Mammary epithelial cell (primary cell): ENCODE measurements at regions of chr16 and their contacts with region 1.

Region 1: GRCh38 chr16:48623304-48624016 is 13.5 kb upstream of the N4BP1 start:
- DNase-seq: peak; percentile 87
- H3K4me3 ChIP-seq: peak overlapping the region; percentile 31 to 48 (median 47)
- H3K27ac ChIP-seq: peak overlapping the region; percentile 23
- H3K4me1 ChIP-seq: peaks cover 8% of the 10 kb centered on the region
- H3K27me3 ChIP-seq: no peaks in the 10 kb centered on the region
- CTCF ChIP-seq: peak; percentile 93 to 100

Region 2: GRCh38 chr16:48353565-48354163 is 269.8 kb before region 1 on chr16:
- CTCF ChIA-PET with region 1: interaction called, 3 read pairs
- dilution Hi-C with region 1: loop called (anchors 25 kb)
- in situ Hi-C with region 1: loop called (anchors 10 kb)
- intact Hi-C with region 1: loop called (anchors 1 kb)
- DNase-seq: peak; percentile 58
- H3K4me3 ChIP-seq: no peak overlapping the region
- H3K27ac ChIP-seq: no peak overlapping the region
- H3K4me1 ChIP-seq: no peaks in the 10 kb centered on the region
- H3K27me3 ChIP-seq: no peaks in the 10 kb centered on the region
- CTCF ChIP-seq: peak; percentile 90 to 95

Region 3: DNA sequence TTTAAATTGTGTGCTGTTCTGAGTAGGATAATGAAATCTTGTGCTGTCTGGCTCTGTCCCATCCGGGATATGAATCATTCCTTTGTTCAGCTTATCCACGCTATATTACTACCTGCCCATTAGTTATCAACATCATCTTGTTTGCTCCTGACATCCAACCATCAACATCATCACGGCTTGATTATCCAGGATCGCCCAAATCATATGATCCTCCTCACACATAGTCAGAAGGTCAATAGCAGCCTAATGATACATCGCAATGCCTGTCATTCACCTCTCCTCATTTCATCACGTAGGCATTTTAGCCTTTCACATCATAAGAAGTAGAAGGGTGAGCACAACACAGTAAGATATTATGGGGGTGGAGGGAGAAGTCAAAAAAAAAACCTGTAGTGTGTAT is 161.3 kb before region 1 on chr16:
- CTCF ChIA-PET with region 1: no interaction called
- dilution Hi-C with region 1: no loop called
- in situ Hi-C with region 1: no loop called
- intact Hi-C with region 1: loop called (anchors 5 kb)
- DNase-seq: peak; percentile 95
- H3K4me3 ChIP-seq: no peak overlapping the region
- H3K27ac ChIP-seq: peak overlapping the region; percentile 5
- H3K4me1 ChIP-seq: peaks cover 12% of the 10 kb centered on the region
- H3K27me3 ChIP-seq: no peaks in the 10 kb centered on the region
- CTCF ChIP-seq: no peak

Region 4: GRCh38 chr16:48535831-48536613 is 87.4 kb before region 1 on chr16:
- CTCF ChIA-PET with region 1: no interaction called
- dilution Hi-C with region 1: no loop called
- in situ Hi-C with region 1: loop called (anchors 5 to 10 kb)
- intact Hi-C with region 1: no loop called
- DNase-seq: peak; percentile 86
- H3K4me3 ChIP-seq: no peak overlapping the region
- H3K27ac ChIP-seq: peak overlapping the region; percentile 63
- H3K4me1 ChIP-seq: peaks cover 24% of the 10 kb centered on the region
- H3K27me3 ChIP-seq: no peaks in the 10 kb centered on the region
- CTCF ChIP-seq: no peak

Region 5: DNA sequence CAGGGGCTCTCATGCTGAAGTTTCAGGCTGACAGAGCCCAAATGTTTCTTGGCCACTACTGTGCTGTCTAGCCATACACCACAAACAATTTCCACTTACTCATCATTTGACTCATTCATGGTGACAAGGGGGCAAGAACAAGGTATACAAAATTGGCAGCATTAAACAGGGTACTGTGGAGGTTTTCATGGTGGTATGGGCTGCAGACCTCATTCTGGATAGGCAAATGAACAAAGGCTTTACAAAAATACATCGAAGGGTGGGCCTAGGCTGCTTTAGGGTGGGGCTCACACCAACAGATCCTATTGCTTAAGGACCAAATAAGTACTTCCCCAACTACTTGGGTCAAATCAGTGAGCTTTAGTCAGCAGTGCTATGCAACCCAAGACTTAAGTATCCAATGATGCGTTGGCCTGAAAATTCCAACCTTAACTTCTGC is 66.5 kb before region 1 on chr16:
- CTCF ChIA-PET with region 1: interaction called, 4 read pairs
- dilution Hi-C with region 1: no loop called
- in situ Hi-C with region 1: no loop called
- intact Hi-C with region 1: loop called (anchors 2 kb)
- DNase-seq: peak; percentile 60
- H3K4me3 ChIP-seq: no peak overlapping the region
- H3K27ac ChIP-seq: no peak overlapping the region
- H3K4me1 ChIP-seq: peaks cover 24% of the 10 kb centered on the region
- H3K27me3 ChIP-seq: no peaks in the 10 kb centered on the region
- CTCF ChIP-seq: no peak

Region 6: DNA sequence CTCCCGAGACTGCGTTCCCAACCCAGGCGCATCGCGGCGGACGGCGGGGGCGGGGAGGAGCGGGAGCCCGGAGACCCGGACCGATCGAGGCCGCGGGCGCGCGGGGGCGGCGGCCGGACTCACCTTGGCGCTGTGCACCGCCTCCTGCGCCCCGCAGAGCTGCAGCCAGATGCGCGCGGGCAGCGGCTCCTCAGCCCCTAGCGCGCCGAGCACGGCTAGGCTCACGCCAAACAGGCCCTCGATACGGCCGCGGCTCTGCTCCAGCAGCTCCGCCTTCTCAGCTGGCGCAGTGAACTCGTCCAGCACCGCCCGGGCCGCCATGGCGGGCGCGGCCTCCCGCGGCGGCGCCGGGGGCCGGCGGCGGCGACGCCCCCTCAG is 13.8 kb before region 1 on chr16:
- CTCF ChIA-PET with region 1: interaction called, 3 read pairs
- dilution Hi-C with region 1: no loop called
- in situ Hi-C with region 1: no loop called
- intact Hi-C with region 1: loop called (anchors 2 kb)
- DNase-seq: peak; percentile 50
- H3K4me3 ChIP-seq: peak overlapping the region; percentile 77 to 98 (median 91)
- H3K27ac ChIP-seq: peak overlapping the region; percentile 95
- H3K4me1 ChIP-seq: peaks cover 61% of the 10 kb centered on the region
- H3K27me3 ChIP-seq: no peaks in the 10 kb centered on the region
- CTCF ChIP-seq: no peak